Vagina (tissue), 2 donors: ENCODE measurements at regions of chr11 and their contacts with region 1.

Region 1: GRCh38 chr11:33027846-33028536 is 11.4 kb upstream of the TCP11L1 start:
- DNase-seq: no peak
- H3K4me3 ChIP-seq: no peak overlapping the region
- H3K27ac ChIP-seq: no peak overlapping the region
- H3K4me1 ChIP-seq: no peaks in the 10 kb centered on the region
- H3K27me3 ChIP-seq: no peaks in the 10 kb centered on the region
- CTCF ChIP-seq: no peak
- POLR2A ChIP-seq: no peak

Region 2: GRCh38 chr11:33045551-33046255 is 17.7 kb after region 1 on chr11:
- intact Hi-C with region 1: loop called (anchors 2 kb)
- DNase-seq: no peak
- H3K4me3 ChIP-seq: no peak overlapping the region
- H3K27ac ChIP-seq: no peak overlapping the region
- H3K4me1 ChIP-seq: peaks cover 31% of the 10 kb centered on the region
- H3K27me3 ChIP-seq: no peaks in the 10 kb centered on the region
- CTCF ChIP-seq: no peak
- POLR2A ChIP-seq: no peak